CD8-positive, alpha-beta T cell (primary cell): ENCODE measurements at regions of chr14 and their contacts with region 1.

Region 1: GRCh38 chr14:98189062-98189461 is 1082.9 kb downstream of the BCL11B start:
- DNase-seq: peak in 3 of 9 experiments; percentile 47 to 71 (median 70)
- ATAC-seq: peak; percentile 34
- H3K4me3 ChIP-seq: peak overlapping the region; percentile 13 to 20
- H3K4me3 Mint-ChIP-seq: peak overlapping the region; percentile 67
- H3K27ac ChIP-seq: peak overlapping the region; percentile 78 to 81
- H3K27ac Mint-ChIP-seq: peak overlapping the region; percentile 95
- H3K4me1 ChIP-seq: peaks cover 99% of the 10 kb centered on the region
- H3K4me1 Mint-ChIP-seq: peaks cover 98% of the 10 kb centered on the region
- H3K27me3 ChIP-seq: no peaks in the 10 kb centered on the region
- H3K27me3 Mint-ChIP-seq: no peaks in the 10 kb centered on the region
- CTCF ChIP-seq: no peak

Region 2: GRCh38 chr14:98014851-98015615 is 174.0 kb before region 1 on chr14:
- CTCF ChIA-PET with region 1: no interaction called
- POLR2A ChIA-PET with region 1: no interaction called
- intact Hi-C with region 1: loop called in 1 of 2 experiments (anchors 5 kb)
- DNase-seq: no peak
- ATAC-seq: no peak
- H3K4me3 ChIP-seq: no peak overlapping the region
- H3K4me3 Mint-ChIP-seq: no peak overlapping the region
- H3K27ac ChIP-seq: no peak overlapping the region
- H3K27ac Mint-ChIP-seq: no peak overlapping the region
- H3K4me1 ChIP-seq: peaks cover 86% of the 10 kb centered on the region
- H3K4me1 Mint-ChIP-seq: peaks cover 79% of the 10 kb centered on the region
- H3K27me3 ChIP-seq: no peaks in the 10 kb centered on the region
- H3K27me3 Mint-ChIP-seq: no peaks in the 10 kb centered on the region
- CTCF ChIP-seq: no peak

Region 3: DNA sequence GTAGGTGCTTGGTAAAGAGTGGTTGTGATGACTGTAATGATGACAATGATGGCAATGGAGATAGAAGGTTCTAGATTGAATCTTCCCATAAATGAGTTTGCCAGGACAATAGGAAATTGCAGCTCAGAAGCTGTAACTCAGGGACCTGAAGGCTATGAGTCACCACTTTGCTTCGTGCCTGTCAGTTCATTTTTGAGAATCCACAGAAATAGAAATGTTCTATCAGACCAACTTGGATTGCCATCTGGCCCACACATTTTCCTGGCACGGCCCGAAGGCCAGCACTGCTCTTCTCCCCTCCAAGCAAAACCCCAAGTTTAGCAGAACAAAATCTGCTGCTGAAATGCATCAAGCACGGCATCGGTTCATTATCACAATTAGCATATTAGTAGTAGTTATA is 44.1 kb before region 1 on chr14:
- CTCF ChIA-PET with region 1: interaction called, 283 read pairs
- POLR2A ChIA-PET with region 1: interaction called, 105 read pairs
- intact Hi-C with region 1: loop called in 1 of 2 experiments (anchors 5 kb)
- DNase-seq: no peak
- ATAC-seq: no peak
- H3K4me3 ChIP-seq: no peak overlapping the region
- H3K4me3 Mint-ChIP-seq: no peak overlapping the region
- H3K27ac ChIP-seq: no peak overlapping the region
- H3K27ac Mint-ChIP-seq: peak overlapping the region; percentile 88
- H3K4me1 ChIP-seq: peaks cover 60% of the 10 kb centered on the region
- H3K4me1 Mint-ChIP-seq: peaks cover 71% of the 10 kb centered on the region
- H3K27me3 ChIP-seq: no peaks in the 10 kb centered on the region
- H3K27me3 Mint-ChIP-seq: no peaks in the 10 kb centered on the region
- CTCF ChIP-seq: no peak

Region 4: DNA sequence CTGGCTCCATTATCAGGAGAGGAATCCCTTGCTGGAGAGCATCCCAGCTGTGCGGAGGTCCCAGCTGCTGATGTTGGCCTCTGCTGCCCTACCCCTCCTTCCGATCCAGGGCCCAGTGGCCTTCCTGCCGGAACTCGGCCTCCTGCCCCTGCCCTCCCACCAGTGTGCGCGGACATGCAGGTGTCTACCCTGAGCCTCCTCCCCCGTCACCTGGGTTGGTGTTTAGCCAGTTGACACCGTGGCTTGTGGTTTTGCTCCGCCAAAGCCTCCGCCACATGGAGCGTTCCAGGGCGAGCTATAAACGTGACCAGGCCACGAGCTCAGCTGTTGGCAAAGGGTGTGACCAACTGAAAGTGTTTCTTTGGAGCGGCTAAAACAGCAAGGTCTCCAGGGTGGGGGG is 21.4 kb before region 1 on chr14:
- CTCF ChIA-PET with region 1: interaction called, 9 read pairs
- POLR2A ChIA-PET with region 1: interaction called, 98 read pairs
- intact Hi-C with region 1: loop called in 1 of 2 experiments (anchors 2 kb)
- DNase-seq: peak in 5 of 9 experiments; percentile 42 to 69 (median 43)
- ATAC-seq: peak; percentile 17
- H3K4me3 ChIP-seq: peak overlapping the region; percentile 13 to 18
- H3K4me3 Mint-ChIP-seq: peak overlapping the region; percentile 64
- H3K27ac ChIP-seq: peak overlapping the region; percentile 39 to 56
- H3K27ac Mint-ChIP-seq: peak overlapping the region; percentile 99
- H3K4me1 ChIP-seq: peaks cover 80% of the 10 kb centered on the region
- H3K4me1 Mint-ChIP-seq: peaks cover 95% of the 10 kb centered on the region
- H3K27me3 ChIP-seq: no peaks in the 10 kb centered on the region
- H3K27me3 Mint-ChIP-seq: no peaks in the 10 kb centered on the region
- CTCF ChIP-seq: no peak

Region 5: GRCh38 chr14:98173305-98173704 is 15.8 kb before region 1 on chr14:
- CTCF ChIA-PET with region 1: interaction called, 12 read pairs
- POLR2A ChIA-PET with region 1: interaction called, 98 read pairs
- intact Hi-C with region 1: loop called (anchors 1 to 2 kb)
- DNase-seq: peak; percentile 39 to 91 (median 77)
- ATAC-seq: peak; percentile 60
- H3K4me3 ChIP-seq: peak overlapping the region; percentile 18 to 28
- H3K4me3 Mint-ChIP-seq: peak overlapping the region; percentile 76
- H3K27ac ChIP-seq: peak overlapping the region; percentile 49 to 76
- H3K27ac Mint-ChIP-seq: peak overlapping the region; percentile 96
- H3K4me1 ChIP-seq: peaks cover 100% of the 10 kb centered on the region
- H3K4me1 Mint-ChIP-seq: peaks cover 99% of the 10 kb centered on the region
- H3K27me3 ChIP-seq: no peaks in the 10 kb centered on the region
- H3K27me3 Mint-ChIP-seq: no peaks in the 10 kb centered on the region
- CTCF ChIP-seq: no peak

Region 6: GRCh38 chr14:98210045-98210672 is 21.1 kb after region 1 on chr14:
- CTCF ChIA-PET with region 1: interaction called, 5 read pairs
- POLR2A ChIA-PET with region 1: interaction called, 8 read pairs
- intact Hi-C with region 1: loop called in 1 of 2 experiments (anchors 2 kb)
- DNase-seq: peak; percentile 25 to 87 (median 75)
- ATAC-seq: peak; percentile 72
- H3K4me3 ChIP-seq: peak overlapping the region; percentile 7 to 20
- H3K4me3 Mint-ChIP-seq: peak overlapping the region; percentile 68
- H3K27ac ChIP-seq: peak overlapping the region; percentile 44 to 68
- H3K27ac Mint-ChIP-seq: peak overlapping the region; percentile 92
- H3K4me1 ChIP-seq: peaks cover 83% of the 10 kb centered on the region
- H3K4me1 Mint-ChIP-seq: peaks cover 97% of the 10 kb centered on the region
- H3K27me3 ChIP-seq: no peaks in the 10 kb centered on the region
- H3K27me3 Mint-ChIP-seq: no peaks in the 10 kb centered on the region
- CTCF ChIP-seq: no peak

Region 7: GRCh38 chr14:98227000-98227726 is 38.1 kb after region 1 on chr14:
- CTCF ChIA-PET with region 1: interaction called, 4 read pairs
- POLR2A ChIA-PET with region 1: interaction called, 7 read pairs
- intact Hi-C with region 1: loop called (anchors 2 to 5 kb)
- DNase-seq: peak in 2 of 9 experiments; percentile 32 to 57
- ATAC-seq: no peak
- H3K4me3 ChIP-seq: peak overlapping the region in 1 of 2 experiments; percentile 25
- H3K4me3 Mint-ChIP-seq: peak overlapping the region; percentile 67
- H3K27ac ChIP-seq: peak overlapping the region; percentile 41 to 63
- H3K27ac Mint-ChIP-seq: peak overlapping the region; percentile 92
- H3K4me1 ChIP-seq: peaks cover 92% of the 10 kb centered on the region
- H3K4me1 Mint-ChIP-seq: peaks cover 89% of the 10 kb centered on the region
- H3K27me3 ChIP-seq: no peaks in the 10 kb centered on the region
- H3K27me3 Mint-ChIP-seq: no peaks in the 10 kb centered on the region
- CTCF ChIP-seq: no peak